Endothelial cell of umbilical vein (primary cell): ENCODE measurements at regions of chr9 and their contacts with region 1.

Region 1: DNA sequence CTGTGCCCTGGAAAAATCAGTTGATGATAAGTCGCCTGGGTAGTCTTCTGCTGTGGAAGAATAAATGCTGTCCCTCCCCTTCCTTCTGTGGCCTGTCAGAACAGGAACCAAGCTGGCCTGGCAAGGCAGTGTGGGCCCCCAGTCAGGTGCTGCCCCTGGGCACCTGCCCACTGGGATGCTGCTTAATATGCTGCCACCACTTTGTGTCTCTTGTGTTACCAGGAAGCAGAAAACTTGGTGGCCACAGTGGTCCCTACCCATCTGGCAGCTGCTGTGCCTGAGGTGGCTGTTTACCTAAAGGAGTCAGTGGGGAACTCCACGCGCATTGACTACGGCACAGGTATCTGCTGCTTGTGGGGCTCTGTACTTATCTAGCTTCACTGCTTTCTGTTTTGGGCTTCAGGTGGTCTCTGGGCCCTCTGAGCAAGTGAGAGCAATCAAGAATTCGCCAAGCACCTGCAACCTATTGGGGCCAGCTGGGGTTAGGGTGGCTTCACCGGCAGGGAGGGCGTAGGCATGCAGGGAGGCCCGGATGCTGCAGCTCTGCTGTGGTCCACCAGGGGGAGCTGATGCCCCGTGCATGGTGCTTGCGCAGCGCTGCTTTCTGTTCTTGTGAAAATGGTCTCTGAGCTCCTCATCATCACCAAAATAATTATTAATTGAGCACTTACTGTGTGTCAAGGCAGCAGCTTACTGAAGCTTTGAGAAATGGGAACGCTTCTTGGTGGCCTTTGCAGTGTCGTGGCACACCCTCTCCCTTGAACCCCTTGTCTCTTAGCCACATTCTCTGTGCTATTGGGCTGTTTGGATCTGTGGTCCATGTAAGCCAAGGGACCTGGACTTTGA is 20.3 kb downstream of the PTPA start:
- DNase-seq: peak; percentile 65
- H3K4me3 ChIP-seq: no peak overlapping the region
- H3K27ac ChIP-seq: no peak overlapping the region
- H3K4me1 ChIP-seq: peaks cover 12% of the 10 kb centered on the region
- H3K27me3 ChIP-seq: no peaks in the 10 kb centered on the region
- CTCF ChIP-seq: peak; percentile 96 to 99
- POLR2A ChIP-seq: no peak

Region 2: GRCh38 chr9:129023036-129023907 is 108.3 kb before region 1 on chr9:
- CTCF ChIA-PET with region 1: no interaction called
- POLR2A ChIA-PET with region 1: no interaction called
- dilution Hi-C with region 1: no loop called
- intact Hi-C with region 1: no loop called
- DNase-seq: no peak
- H3K4me3 ChIP-seq: no peak overlapping the region
- H3K27ac ChIP-seq: no peak overlapping the region
- H3K4me1 ChIP-seq: peaks cover 7% of the 10 kb centered on the region
- H3K27me3 ChIP-seq: no peaks in the 10 kb centered on the region
- CTCF ChIP-seq: no peak
- POLR2A ChIP-seq: no peak

Region 3: DNA sequence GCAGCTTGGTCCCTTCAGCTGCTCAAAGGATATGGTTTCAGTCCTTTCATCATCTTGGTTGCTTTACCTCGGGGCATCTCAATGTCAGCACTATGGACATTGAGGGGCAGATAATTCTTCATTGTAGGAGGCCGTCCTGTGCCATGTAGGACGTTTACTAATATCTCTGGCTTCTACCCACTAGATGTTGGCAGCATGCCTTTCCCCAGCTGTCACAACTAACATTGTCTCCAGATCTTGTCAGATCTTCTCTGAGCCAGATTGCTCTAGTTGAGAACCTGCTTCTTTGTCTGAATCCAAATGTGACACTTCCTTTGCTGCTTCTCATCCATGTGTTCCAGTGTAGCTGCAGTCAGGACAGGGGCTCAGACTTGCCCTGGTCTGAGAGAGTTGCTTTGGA is 10.0 kb before region 1 on chr9:
- CTCF ChIA-PET with region 1: interaction called, 10 read pairs
- POLR2A ChIA-PET with region 1: no interaction called
- dilution Hi-C with region 1: no loop called
- intact Hi-C with region 1: no loop called
- DNase-seq: no peak
- H3K4me3 ChIP-seq: no peak overlapping the region
- H3K27ac ChIP-seq: no peak overlapping the region
- H3K4me1 ChIP-seq: peaks cover 3% of the 10 kb centered on the region
- H3K27me3 ChIP-seq: no peaks in the 10 kb centered on the region
- CTCF ChIP-seq: no peak
- POLR2A ChIP-seq: no peak

Region 4: GRCh38 chr9:129166623-129167557 is 35.4 kb after region 1 on chr9:
- CTCF ChIA-PET with region 1: interaction called, 10 read pairs
- POLR2A ChIA-PET with region 1: interaction called, 5 read pairs
- dilution Hi-C with region 1: no loop called
- intact Hi-C with region 1: no loop called
- DNase-seq: peak; percentile 90
- H3K4me3 ChIP-seq: no peak overlapping the region
- H3K27ac ChIP-seq: peak overlapping the region; percentile 88
- H3K4me1 ChIP-seq: peaks cover 31% of the 10 kb centered on the region
- H3K27me3 ChIP-seq: no peaks in the 10 kb centered on the region
- CTCF ChIP-seq: no peak
- POLR2A ChIP-seq: peak; percentile 66

Region 5: GRCh38 chr9:129617167-129617566 is 485.6 kb after region 1 on chr9:
- CTCF ChIA-PET with region 1: interaction called, 232 read pairs
- POLR2A ChIA-PET with region 1: no interaction called
- dilution Hi-C with region 1: no loop called
- intact Hi-C with region 1: no loop called
- DNase-seq: peak; percentile 31
- H3K4me3 ChIP-seq: no peak overlapping the region
- H3K27ac ChIP-seq: no peak overlapping the region
- H3K4me1 ChIP-seq: no peaks in the 10 kb centered on the region
- H3K27me3 ChIP-seq: peaks cover 0 to 8% of the 10 kb centered on the region in 2 experiments
- CTCF ChIP-seq: peak; percentile 41 to 46
- POLR2A ChIP-seq: no peak

Region 6: DNA sequence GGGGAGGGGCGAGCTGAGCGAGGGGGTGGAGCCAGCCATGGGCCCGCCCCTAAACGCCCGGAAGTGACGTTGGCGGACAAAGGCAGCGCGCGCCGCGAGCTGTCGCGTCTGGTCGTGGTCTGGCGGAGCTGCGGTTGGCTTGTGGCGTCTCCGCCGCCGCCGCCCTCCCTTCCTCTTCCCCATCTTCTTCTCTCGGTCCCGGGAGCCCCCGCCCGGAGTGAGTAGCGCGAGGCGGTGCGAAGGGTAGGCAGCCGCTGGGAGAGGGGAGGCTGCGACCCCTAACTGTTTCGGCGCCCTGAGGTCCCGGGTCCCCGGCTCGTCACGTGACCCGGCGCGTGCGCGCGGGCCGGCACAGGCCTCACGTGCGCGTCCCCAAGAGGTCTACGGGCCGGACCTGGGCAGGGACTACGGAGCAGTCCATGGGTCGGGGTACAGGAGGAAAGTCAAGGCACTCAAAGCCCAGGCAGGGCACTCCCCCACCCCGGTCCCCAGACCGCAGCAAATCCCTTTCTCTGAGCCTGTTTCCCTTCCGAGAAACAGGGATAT is 494.6 kb after region 1 on chr9 and contains the start of gene NTMT1:
- CTCF ChIA-PET with region 1: interaction called, 232 read pairs
- POLR2A ChIA-PET with region 1: no interaction called
- dilution Hi-C with region 1: no loop called
- intact Hi-C with region 1: loop called (anchors 1 kb)
- DNase-seq: peak; percentile 84
- H3K4me3 ChIP-seq: peak within 1 kb of the TSS; percentile 35 to 76 (median 71)
- H3K27ac ChIP-seq: peak within 1 kb of the TSS; percentile 71
- H3K4me1 ChIP-seq: peaks cover 16% of the 10 kb centered on the region
- H3K27me3 ChIP-seq: no peaks in the 10 kb centered on the region
- CTCF ChIP-seq: no peak
- POLR2A ChIP-seq: peak; percentile 93
- total RNA-seq, gene NTMT1: 47.6 and 53.2 TPM in 2 replicates

Region 7: GRCh38 chr9:129783516-129784361 is 652.2 kb after region 1 on chr9:
- CTCF ChIA-PET with region 1: interaction called, 10 read pairs
- POLR2A ChIA-PET with region 1: no interaction called
- dilution Hi-C with region 1: no loop called
- intact Hi-C with region 1: loop called (anchors 5 kb)
- DNase-seq: peak; percentile 62
- H3K4me3 ChIP-seq: no peak overlapping the region
- H3K27ac ChIP-seq: no peak overlapping the region
- H3K4me1 ChIP-seq: no peaks in the 10 kb centered on the region
- H3K27me3 ChIP-seq: peaks cover 0 to 2% of the 10 kb centered on the region in 2 experiments
- CTCF ChIP-seq: peak; percentile 81 to 84
- POLR2A ChIP-seq: no peak